ENCODE measurements at regions of chr5 and their contacts with region 1.

Region 1: DNA sequence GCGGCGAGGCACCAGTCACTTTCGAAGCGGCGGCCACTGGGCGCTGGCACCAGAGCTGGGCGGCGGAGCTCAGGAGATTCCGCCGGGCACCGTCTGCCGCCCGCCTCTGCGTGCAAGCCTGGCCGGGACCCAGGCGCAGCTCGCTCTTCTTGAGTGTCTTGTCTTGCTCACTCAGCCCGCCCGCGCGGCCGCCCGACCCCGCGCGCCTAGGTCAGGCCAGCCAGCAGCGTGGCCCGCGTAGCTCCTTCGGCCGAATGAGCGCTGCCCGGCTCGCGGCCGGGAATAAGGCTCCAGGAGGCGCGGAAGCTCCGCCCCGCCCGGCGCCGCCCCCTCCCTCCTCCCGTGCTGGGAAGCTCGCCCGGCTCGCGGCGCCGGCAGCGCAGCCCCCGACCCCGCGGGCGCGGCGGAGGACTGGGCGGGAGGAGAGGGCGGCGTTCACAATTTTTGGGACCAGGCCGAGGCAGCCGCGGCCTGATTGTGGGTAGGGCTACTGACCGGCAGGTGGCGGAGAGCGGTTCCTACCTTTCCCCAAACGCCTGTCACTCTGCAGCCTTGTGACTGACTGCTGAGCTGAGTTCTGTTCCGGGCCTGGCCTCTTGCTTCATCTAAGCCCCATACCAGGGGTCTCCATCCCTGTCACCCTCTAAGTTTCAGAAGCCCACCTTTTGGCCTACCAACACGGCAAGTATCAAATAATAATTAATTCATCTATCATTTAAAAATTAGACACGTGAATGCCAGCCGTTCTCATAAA is at the start of gene HBEGF:
- DNase-seq: peak; percentile 93
- ATAC-seq: peak; percentile 86
- H3K4me3 Mint-ChIP-seq: peak within 1 kb of the TSS; percentile 68
- H3K27ac Mint-ChIP-seq: no peak within 1 kb of the TSS
- H3K4me1 Mint-ChIP-seq: peaks cover 27% of the 10 kb centered on the region
- H3K27me3 Mint-ChIP-seq: peaks cover 11% of the 10 kb centered on the region
- CTCF ChIP-seq: peak; percentile 11; the same call in 1 of the 2 replicates
- total RNA-seq, gene HBEGF: 2.2 to 4.0 TPM (median 2.5 TPM) in 3 replicates

Region 2: GRCh38 chr5:140207250-140207964 is 139.1 kb before region 1 on chr5:
- CTCF ChIA-PET with region 1: interaction called, 10 read pairs
- POLR2A ChIA-PET with region 1: no interaction called
- DNase-seq: no peak
- ATAC-seq: no peak
- H3K4me3 Mint-ChIP-seq: no peak overlapping the region
- H3K27ac Mint-ChIP-seq: no peak overlapping the region; the same call in 1 of the 2 replicates
- H3K4me1 Mint-ChIP-seq: peaks cover 12% of the 10 kb centered on the region
- H3K27me3 Mint-ChIP-seq: no peaks in the 10 kb centered on the region
- CTCF ChIP-seq: no peak

Region 3: DNA sequence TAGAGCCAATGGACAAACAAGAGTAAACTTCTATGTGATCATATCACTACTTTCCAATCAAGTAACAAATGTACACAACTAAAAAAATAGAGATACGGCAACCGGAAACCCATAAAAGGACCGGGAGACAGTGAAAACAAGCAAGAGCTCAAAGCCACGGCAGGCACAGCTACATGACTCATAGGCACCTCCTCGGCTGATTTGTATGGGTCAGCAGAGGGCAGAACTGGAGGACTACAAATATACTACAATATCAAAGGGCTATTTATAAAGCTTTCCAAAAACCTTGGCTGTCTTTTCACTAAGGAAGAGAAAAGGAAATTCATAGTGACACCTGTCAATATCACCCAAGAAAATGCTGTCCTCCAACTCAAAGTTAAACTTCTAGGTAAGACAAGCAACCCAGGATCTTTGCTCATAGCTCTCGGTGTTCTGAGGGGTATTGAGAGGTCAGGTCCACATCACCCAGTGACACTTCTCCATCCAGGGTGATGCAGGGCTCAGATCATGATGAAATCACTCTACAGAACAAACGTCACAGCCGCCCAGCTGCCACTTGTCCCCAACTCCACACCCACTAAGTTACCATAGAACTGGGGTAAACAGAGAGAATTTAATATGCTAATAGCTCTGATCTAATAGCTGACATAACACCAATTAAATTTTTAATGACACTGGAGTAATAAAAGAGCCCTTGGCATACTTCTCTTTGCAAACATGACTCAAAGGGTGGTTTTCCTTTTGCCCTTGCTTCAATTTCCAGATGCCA is 84.9 kb before region 1 on chr5:
- CTCF ChIA-PET with region 1: interaction called, 29 read pairs
- POLR2A ChIA-PET with region 1: no interaction called
- DNase-seq: no peak
- ATAC-seq: no peak
- H3K4me3 Mint-ChIP-seq: no peak overlapping the region
- H3K27ac Mint-ChIP-seq: no peak overlapping the region
- H3K4me1 Mint-ChIP-seq: peaks cover 22% of the 10 kb centered on the region
- H3K27me3 Mint-ChIP-seq: no peaks in the 10 kb centered on the region
- CTCF ChIP-seq: no peak

Region 4: GRCh38 chr5:140312067-140312790 is 34.3 kb before region 1 on chr5:
- CTCF ChIA-PET with region 1: interaction called, 23 read pairs
- POLR2A ChIA-PET with region 1: no interaction called
- DNase-seq: no peak
- ATAC-seq: peak; percentile 94
- H3K4me3 Mint-ChIP-seq: no peak overlapping the region
- H3K27ac Mint-ChIP-seq: peak overlapping the region; percentile 59
- H3K4me1 Mint-ChIP-seq: peaks cover 14% of the 10 kb centered on the region
- H3K27me3 Mint-ChIP-seq: no peaks in the 10 kb centered on the region
- CTCF ChIP-seq: no peak

Region 5: DNA sequence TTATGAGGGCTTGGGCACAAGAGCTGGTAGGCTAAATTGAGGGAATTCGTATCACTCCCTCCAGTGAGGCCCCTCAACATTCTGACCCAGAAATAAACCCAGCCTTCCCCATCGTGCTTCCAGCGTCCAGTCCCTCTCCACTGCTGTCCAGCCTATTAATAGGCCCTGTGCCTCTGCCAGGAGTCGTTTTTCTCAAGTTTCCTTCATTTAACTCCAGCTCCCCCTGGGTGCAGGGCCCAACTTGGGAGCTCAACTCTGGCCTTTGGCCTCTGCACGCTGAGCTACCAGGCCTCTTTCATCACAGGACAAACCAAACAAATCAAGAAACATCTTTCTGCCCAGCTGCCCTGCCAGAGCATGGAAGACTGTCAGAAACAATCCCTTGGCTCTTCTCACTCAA is 10.1 kb before region 1 on chr5:
- CTCF ChIA-PET with region 1: interaction called, 79 read pairs
- POLR2A ChIA-PET with region 1: interaction called, 4 read pairs
- DNase-seq: no peak
- ATAC-seq: no peak
- H3K4me3 Mint-ChIP-seq: no peak overlapping the region
- H3K27ac Mint-ChIP-seq: no peak overlapping the region
- H3K4me1 Mint-ChIP-seq: no peaks in the 10 kb centered on the region
- H3K27me3 Mint-ChIP-seq: no peaks in the 10 kb centered on the region
- CTCF ChIP-seq: no peak

Region 6: GRCh38 chr5:140362860-140363630 is 16.5 kb after region 1 on chr5:
- CTCF ChIA-PET with region 1: interaction called, 90 read pairs
- POLR2A ChIA-PET with region 1: interaction called, 11 read pairs
- DNase-seq: peak; percentile 95
- ATAC-seq: peak; percentile 88
- H3K4me3 Mint-ChIP-seq: peak overlapping the region; percentile 79
- H3K27ac Mint-ChIP-seq: no peak overlapping the region
- H3K4me1 Mint-ChIP-seq: peaks cover 7% of the 10 kb centered on the region
- H3K27me3 Mint-ChIP-seq: peaks cover 9% of the 10 kb centered on the region
- CTCF ChIP-seq: peak; percentile 96

Region 7: GRCh38 chr5:140547508-140548299 is 201.2 kb after region 1 on chr5 and contains the start of gene EIF4EBP3:
- CTCF ChIA-PET with region 1: interaction called, 14 read pairs
- POLR2A ChIA-PET with region 1: interaction called, 6 read pairs
- DNase-seq: peak; percentile 98
- ATAC-seq: peak; percentile 95
- H3K4me3 Mint-ChIP-seq: peak within 1 kb of the TSS; percentile 77
- H3K27ac Mint-ChIP-seq: peak within 1 kb of the TSS; percentile 97
- H3K4me1 Mint-ChIP-seq: peaks cover 25% of the 10 kb centered on the region
- H3K27me3 Mint-ChIP-seq: no peaks in the 10 kb centered on the region
- CTCF ChIP-seq: no peak
- total RNA-seq, gene EIF4EBP3: 8.4 to 9.8 TPM (median 8.8 TPM) in 3 replicates

Measured in WTC11 (cell line).